ENCODE measurements at regions of chr1 and their contacts with region 1.

Region 1: GRCh38 chr1:240189386-240189989 is 97.8 kb downstream of the FMN2 start:
- DNase-seq: peak; percentile 32
- ATAC-seq: no peak
- H3K4me3 Mint-ChIP-seq: no peak overlapping the region
- H3K27ac Mint-ChIP-seq: no peak overlapping the region
- H3K4me1 Mint-ChIP-seq: peaks cover 2% of the 10 kb centered on the region
- H3K27me3 Mint-ChIP-seq: peaks cover 18% of the 10 kb centered on the region

Region 2: DNA sequence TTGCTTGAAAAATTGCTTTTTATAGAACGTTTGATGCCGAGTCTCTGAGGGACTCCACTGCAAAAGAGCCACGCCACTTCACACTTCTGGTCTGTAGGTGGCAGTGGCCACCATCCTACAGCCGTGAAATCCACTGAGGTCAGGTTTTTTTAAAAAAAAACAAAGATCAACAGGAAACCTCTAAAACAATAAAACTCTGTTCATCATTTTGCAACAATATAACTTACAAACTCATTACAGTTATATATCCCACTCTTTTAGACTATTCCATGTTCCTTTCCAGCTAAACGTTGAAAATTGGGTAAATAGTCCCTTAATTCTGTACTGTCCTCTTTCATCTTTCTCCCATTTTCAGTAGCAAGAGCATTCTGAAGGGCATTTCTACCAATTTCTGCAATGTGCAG is 162.4 kb before region 1 on chr1:
- CTCF ChIA-PET with region 1: interaction called, 3 read pairs
- POLR2A ChIA-PET with region 1: no interaction called
- intact Hi-C with region 1: loop called (anchors 1 to 2 kb)
- DNase-seq: peak; percentile 46
- ATAC-seq: peak; percentile 39
- H3K4me3 Mint-ChIP-seq: no peak overlapping the region
- H3K27ac Mint-ChIP-seq: no peak overlapping the region
- H3K4me1 Mint-ChIP-seq: no peaks in the 10 kb centered on the region
- H3K27me3 Mint-ChIP-seq: peaks cover 3% of the 10 kb centered on the region

Region 3: GRCh38 chr1:240114222-240114621 is 75.3 kb before region 1 on chr1:
- CTCF ChIA-PET with region 1: no interaction called
- POLR2A ChIA-PET with region 1: no interaction called
- intact Hi-C with region 1: loop called in 1 of 2 experiments (anchors 2 kb)
- DNase-seq: no peak
- ATAC-seq: no peak
- H3K4me3 Mint-ChIP-seq: no peak overlapping the region
- H3K27ac Mint-ChIP-seq: no peak overlapping the region
- H3K4me1 Mint-ChIP-seq: no peaks in the 10 kb centered on the region
- H3K27me3 Mint-ChIP-seq: no peaks in the 10 kb centered on the region

Region 4: GRCh38 chr1:240611619-240612480 is 422.4 kb after region 1 on chr1 and contains the start of gene GREM2:
- CTCF ChIA-PET with region 1: no interaction called
- POLR2A ChIA-PET with region 1: no interaction called
- intact Hi-C with region 1: loop called (anchors 5 kb)
- DNase-seq: peak; percentile 63
- ATAC-seq: peak; percentile 86
- H3K4me3 Mint-ChIP-seq: peak within 1 kb of the TSS; percentile 75
- H3K27ac Mint-ChIP-seq: no peak within 1 kb of the TSS
- H3K4me1 Mint-ChIP-seq: peaks cover 25% of the 10 kb centered on the region
- H3K27me3 Mint-ChIP-seq: peaks cover 37% of the 10 kb centered on the region
- total RNA-seq, gene GREM2: 0.07 TPM

Region 5: GRCh38 chr1:240652549-240652948 is 463.1 kb after region 1 on chr1:
- CTCF ChIA-PET with region 1: no interaction called
- POLR2A ChIA-PET with region 1: no interaction called
- intact Hi-C with region 1: no loop called
- DNase-seq: no peak
- ATAC-seq: no peak
- H3K4me3 Mint-ChIP-seq: no peak overlapping the region
- H3K27ac Mint-ChIP-seq: no peak overlapping the region
- H3K4me1 Mint-ChIP-seq: no peaks in the 10 kb centered on the region
- H3K27me3 Mint-ChIP-seq: no peaks in the 10 kb centered on the region

Region 6: GRCh38 chr1:240691521-240692338 is 502.2 kb after region 1 on chr1:
- CTCF ChIA-PET with region 1: no interaction called
- POLR2A ChIA-PET with region 1: no interaction called
- intact Hi-C with region 1: loop called in 1 of 2 experiments (anchors 5 kb)
- DNase-seq: peak; percentile 7
- ATAC-seq: no peak
- H3K4me3 Mint-ChIP-seq: no peak overlapping the region
- H3K27ac Mint-ChIP-seq: no peak overlapping the region
- H3K4me1 Mint-ChIP-seq: peaks cover 10% of the 10 kb centered on the region
- H3K27me3 Mint-ChIP-seq: peaks cover 1% of the 10 kb centered on the region